Activated CD4-positive, alpha-beta T cell treated with anti-CD3 and anti-CD28 coated beads for 36 hours (primary cell): ENCODE measurements at regions of chr13 and their contacts with region 1.

Region 1: GRCh38 chr13:114234645-114235421 is at the start of gene CDC16:
- DNase-seq: peak; percentile 95
- ATAC-seq: peak; percentile 94
- H3K4me3 Mint-ChIP-seq: peak within 1 kb of the TSS; percentile 85
- H3K27ac Mint-ChIP-seq: peak within 1 kb of the TSS; percentile 95
- H3K4me1 Mint-ChIP-seq: peaks cover 40% of the 10 kb centered on the region
- H3K27me3 Mint-ChIP-seq: no peaks in the 10 kb centered on the region
- total RNA-seq, gene CDC16: 83.5 to 90.8 TPM

Region 2: DNA sequence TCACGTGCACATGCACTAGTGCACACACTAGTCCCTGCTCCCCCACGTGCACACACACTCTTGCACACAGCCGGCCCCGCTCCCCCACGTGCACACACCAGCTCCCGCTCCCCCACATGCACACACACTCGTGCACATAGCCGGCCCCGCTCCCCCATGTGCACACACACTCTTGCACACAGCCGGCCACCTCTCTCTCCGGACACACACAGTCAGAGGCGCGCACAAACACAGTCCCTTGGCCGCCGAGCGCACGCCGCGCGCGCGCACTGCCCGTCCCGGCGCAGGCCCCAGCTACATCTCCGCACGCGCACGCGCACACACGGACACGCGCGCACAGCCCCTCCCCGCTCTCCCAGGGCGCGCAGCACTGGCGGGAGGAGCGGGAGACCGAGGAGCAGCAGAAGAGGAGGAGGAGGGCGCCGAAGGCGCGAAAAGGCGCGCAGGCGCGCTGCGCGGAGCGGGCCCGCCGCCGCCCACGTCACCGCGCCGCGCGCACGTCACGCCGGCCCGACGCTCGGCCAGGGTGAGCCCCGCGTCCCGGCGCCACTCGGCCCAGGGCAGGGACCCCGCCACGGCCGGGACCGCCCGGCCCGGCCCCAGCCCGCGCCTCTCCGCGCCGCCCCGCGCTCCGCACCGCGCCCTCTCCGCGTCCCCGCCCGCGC is 650.5 kb before region 1 on chr13 and contains the start of gene TFDP1:
- CTCF ChIA-PET with region 1: no interaction called
- POLR2A ChIA-PET with region 1: no interaction called
- intact Hi-C with region 1: loop called in 1 of 2 experiments (anchors 2 kb)
- DNase-seq: peak; percentile 93
- ATAC-seq: peak; percentile 92
- H3K4me3 Mint-ChIP-seq: peak within 1 kb of the TSS; percentile 90
- H3K27ac Mint-ChIP-seq: peak within 1 kb of the TSS; percentile 80
- H3K4me1 Mint-ChIP-seq: peaks cover 36% of the 10 kb centered on the region
- H3K27me3 Mint-ChIP-seq: no peaks in the 10 kb centered on the region
- total RNA-seq, gene TFDP1: 159 to 175 TPM

Region 3: GRCh38 chr13:113816946-113817859 is 417.6 kb before region 1 on chr13:
- CTCF ChIA-PET with region 1: no interaction called
- POLR2A ChIA-PET with region 1: no interaction called
- intact Hi-C with region 1: loop called (anchors 2 kb)
- DNase-seq: peak; percentile 95
- ATAC-seq: peak; percentile 85
- H3K4me3 Mint-ChIP-seq: peak overlapping the region; percentile 96
- H3K27ac Mint-ChIP-seq: no peak overlapping the region
- H3K4me1 Mint-ChIP-seq: peaks cover 21% of the 10 kb centered on the region
- H3K27me3 Mint-ChIP-seq: no peaks in the 10 kb centered on the region

Region 4: GRCh38 chr13:113951246-113951999 is 283.4 kb before region 1 on chr13:
- CTCF ChIA-PET with region 1: no interaction called
- POLR2A ChIA-PET with region 1: interaction called, 3 read pairs
- intact Hi-C with region 1: loop called in 1 of 2 experiments (anchors 2 kb)
- DNase-seq: peak; percentile 83
- ATAC-seq: peak; percentile 89
- H3K4me3 Mint-ChIP-seq: no peak overlapping the region
- H3K27ac Mint-ChIP-seq: no peak overlapping the region
- H3K4me1 Mint-ChIP-seq: peaks cover 6% of the 10 kb centered on the region
- H3K27me3 Mint-ChIP-seq: no peaks in the 10 kb centered on the region

Region 5: DNA sequence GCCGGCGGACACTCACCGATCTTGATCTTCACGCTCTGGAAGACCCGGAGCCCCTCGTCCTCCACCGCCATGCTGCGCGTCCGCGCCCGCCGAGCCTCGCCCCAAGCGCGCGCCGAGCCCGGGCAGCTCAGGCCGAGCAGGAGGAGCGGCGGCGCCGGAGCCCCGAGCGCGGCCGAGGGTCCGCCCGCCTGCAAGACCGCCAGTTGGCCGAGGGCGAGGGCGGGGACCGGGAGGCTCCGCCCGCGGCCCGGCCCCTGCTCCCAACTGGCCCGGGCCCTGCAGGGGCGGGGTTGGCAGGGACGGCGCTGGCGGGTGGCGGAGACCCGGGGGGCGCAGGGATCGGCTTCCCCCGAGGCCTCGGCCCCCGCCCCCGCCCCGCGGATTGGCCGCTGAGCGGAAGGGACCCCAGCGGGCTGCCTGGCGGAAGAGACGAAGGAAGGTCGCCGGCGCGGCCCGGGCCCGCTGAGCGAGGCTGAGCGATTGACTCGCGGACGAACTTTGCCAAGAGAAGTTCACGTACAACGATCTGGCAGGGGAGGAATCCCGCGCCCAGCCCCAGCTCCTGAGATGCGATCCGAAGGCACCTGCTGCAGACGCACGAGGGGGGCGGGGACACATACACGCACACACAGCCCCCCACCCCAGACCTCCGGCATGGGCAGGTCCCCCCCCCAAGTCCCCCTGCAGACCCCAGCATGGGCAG is 102.3 kb before region 1 on chr13 and contains the start of gene RASA3:
- CTCF ChIA-PET with region 1: no interaction called
- POLR2A ChIA-PET with region 1: no interaction called
- intact Hi-C with region 1: loop called in 1 of 2 experiments (anchors 1 kb)
- DNase-seq: peak; percentile 74
- ATAC-seq: peak; percentile 35
- H3K4me3 Mint-ChIP-seq: peak within 1 kb of the TSS; percentile 100
- H3K27ac Mint-ChIP-seq: peak within 1 kb of the TSS; percentile 95
- H3K4me1 Mint-ChIP-seq: peaks cover 39% of the 10 kb centered on the region
- H3K27me3 Mint-ChIP-seq: no peaks in the 10 kb centered on the region
- total RNA-seq, gene RASA3: 33.0 to 34.7 TPM

Region 6: DNA sequence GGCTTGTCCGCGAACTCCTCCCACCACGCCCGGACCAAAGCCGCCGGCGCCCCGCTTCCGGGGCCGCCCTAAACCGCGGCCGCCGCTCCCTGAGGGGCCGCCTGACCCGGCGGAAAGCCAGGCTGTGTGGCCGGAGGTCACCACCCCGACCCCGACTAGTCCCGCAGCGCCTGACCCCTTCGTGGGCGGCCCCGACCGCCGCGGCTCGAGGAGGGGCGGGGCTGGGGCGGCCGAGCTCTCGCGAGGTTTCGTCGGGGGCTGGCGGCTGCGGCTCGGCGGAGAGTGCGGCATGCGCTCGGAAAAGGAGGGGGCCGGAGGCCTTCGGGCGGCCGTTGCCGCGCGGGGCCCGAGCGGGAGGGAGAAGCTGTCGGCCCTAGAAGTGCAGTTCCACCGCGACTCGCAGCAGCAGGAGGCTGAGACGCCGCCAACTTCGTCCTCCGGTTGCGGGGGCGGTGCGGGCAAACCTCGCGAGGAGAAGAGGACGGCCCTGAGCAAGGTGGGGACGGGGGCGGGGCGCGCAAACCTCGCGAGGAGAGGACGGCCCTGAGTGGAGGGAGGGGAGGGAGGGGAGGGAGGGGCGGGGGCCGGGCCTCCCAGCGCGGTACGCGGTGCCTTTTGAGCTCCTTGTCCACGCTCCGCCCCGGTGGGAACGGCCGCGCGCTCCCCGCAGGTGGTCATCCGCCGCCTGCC is 46.7 kb after region 1 on chr13 and contains the start of gene UPF3A:
- CTCF ChIA-PET with region 1: no interaction called
- POLR2A ChIA-PET with region 1: no interaction called
- intact Hi-C with region 1: loop called in 1 of 2 experiments (anchors 1 kb)
- DNase-seq: peak; percentile 95
- ATAC-seq: peak; percentile 83
- H3K4me3 Mint-ChIP-seq: peak within 1 kb of the TSS; percentile 84
- H3K27ac Mint-ChIP-seq: peak within 1 kb of the TSS; percentile 99
- H3K4me1 Mint-ChIP-seq: peaks cover 49% of the 10 kb centered on the region
- H3K27me3 Mint-ChIP-seq: no peaks in the 10 kb centered on the region
- total RNA-seq, gene UPF3A: 41.1 to 43.3 TPM

Region 7: DNA sequence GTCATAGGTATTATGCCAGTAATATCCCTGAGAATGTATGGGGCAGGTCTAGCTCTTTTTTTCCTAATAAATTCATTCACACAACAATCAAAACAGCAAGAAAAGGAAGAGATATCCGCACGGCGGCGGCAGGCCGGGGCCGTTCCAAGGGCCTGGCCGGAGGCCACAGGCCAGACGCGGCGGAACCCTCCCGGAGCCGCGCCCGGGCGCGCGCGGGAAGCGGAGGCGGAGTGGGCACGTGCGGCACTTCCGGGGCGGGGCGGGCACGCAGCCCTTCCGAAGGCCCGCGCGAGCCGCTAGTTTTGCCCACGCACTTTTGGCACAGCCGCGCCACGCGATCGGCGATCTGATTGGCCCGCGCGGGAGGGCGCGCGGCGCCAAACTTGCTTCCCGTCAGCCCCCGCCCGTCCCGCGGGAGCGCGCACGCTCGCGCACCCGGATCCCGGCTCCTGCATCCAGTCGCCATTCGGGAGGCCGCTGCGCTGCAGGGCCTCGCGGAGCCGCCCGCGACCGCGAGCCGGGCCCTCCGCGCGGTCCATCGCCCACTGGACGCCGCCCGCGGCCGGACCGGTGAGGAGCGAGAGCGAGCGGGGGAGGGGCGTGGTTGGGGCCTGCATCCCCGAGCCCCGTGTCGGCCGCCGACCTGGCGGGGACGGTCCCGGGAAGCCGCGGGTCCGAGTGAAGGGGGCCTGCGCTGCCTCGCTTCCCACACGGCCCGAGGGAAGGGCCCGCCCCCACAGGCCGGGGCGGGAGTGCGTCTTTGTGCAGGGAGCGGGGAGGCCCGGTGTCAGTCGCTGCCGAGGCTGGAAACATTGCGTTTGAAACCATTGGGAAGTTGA is 79.5 kb after region 1 on chr13 and contains the start of gene CHAMP1:
- CTCF ChIA-PET with region 1: interaction called, 3 read pairs
- POLR2A ChIA-PET with region 1: no interaction called
- intact Hi-C with region 1: loop called in 1 of 2 experiments (anchors 1 kb)
- DNase-seq: peak; percentile 97
- ATAC-seq: peak; percentile 77
- H3K4me3 Mint-ChIP-seq: peak within 1 kb of the TSS; percentile 97
- H3K27ac Mint-ChIP-seq: peak within 1 kb of the TSS; percentile 98
- H3K4me1 Mint-ChIP-seq: peaks cover 43% of the 10 kb centered on the region
- H3K27me3 Mint-ChIP-seq: no peaks in the 10 kb centered on the region
- total RNA-seq, gene CHAMP1: 39.4 to 54.3 TPM